Lower lobe of right lung (tissue), 2 donors: ENCODE measurements at regions of chr11 and their contacts with region 1.

Region 1: GRCh38 chr11:2892215-2893020 is 6.8 kb upstream of the CDKN1C start:
- DNase-seq: peak; percentile 67
- ATAC-seq: peak; percentile 59 to 68
- H3K4me3 ChIP-seq: peak overlapping the region; percentile 56
- H3K27ac ChIP-seq: peak overlapping the region; percentile 72
- H3K4me1 ChIP-seq: peaks cover 37% of the 10 kb centered on the region
- H3K27me3 ChIP-seq: no peaks in the 10 kb centered on the region
- CTCF ChIP-seq: peak; percentile 91

Region 2: DNA sequence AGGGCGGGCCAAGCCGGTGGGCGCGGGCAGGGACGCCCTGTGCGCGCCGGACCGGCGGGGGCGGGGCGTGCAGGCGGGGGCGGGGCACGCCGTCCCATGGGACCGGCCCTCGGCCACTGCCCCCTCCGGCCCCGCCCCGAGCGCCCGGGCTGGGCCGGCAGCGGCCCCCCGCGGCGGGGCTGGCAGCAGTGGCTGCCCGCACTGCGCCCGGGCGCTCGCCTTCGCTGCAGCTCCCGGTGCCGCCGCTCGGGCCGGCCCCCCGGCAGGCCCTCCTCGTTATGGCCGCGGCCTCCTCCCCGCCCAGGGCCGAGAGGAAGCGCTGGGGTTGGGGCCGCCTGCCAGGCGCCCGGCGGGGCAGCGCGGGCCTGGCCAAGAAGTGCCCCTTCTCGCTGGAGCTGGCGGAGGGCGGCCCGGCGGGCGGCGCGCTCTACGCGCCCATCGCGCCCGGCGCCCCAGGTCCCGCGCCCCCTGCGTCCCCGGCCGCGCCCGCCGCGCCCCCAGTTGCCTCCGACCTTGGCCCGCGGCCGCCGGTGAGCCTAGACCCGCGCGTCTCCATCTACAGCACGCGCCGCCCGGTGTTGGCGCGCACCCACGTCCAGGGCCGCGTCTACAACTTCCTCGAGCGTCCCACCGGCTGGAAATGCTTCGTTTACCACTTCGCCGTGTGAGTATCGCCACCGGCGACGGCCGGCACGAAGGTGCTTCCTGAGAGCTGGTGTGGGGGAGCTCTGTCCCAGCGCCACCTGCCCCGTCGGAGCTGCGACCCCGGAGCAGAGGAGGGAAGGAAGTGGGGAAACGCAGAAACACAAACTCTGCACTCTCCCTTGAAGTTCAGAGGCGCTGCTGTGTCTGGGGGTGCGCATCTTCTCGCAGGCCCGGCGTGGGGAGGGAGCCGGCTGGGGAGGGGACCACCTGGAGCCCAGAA is 447.3 kb before region 1 on chr11 and contains the start of gene KCNQ1:
- intact Hi-C with region 1: loop called (anchors 10 kb)
- DNase-seq: peak; percentile 86
- ATAC-seq: peak; percentile 92 to 93
- H3K4me3 ChIP-seq: peak within 1 kb of the TSS; percentile 61
- H3K27ac ChIP-seq: peak within 1 kb of the TSS; percentile 62
- H3K4me1 ChIP-seq: peaks cover 35% of the 10 kb centered on the region
- H3K27me3 ChIP-seq: peaks cover 4% of the 10 kb centered on the region
- CTCF ChIP-seq: no peak
- total RNA-seq, gene KCNQ1: 51.0 TPM

Region 3: DNA sequence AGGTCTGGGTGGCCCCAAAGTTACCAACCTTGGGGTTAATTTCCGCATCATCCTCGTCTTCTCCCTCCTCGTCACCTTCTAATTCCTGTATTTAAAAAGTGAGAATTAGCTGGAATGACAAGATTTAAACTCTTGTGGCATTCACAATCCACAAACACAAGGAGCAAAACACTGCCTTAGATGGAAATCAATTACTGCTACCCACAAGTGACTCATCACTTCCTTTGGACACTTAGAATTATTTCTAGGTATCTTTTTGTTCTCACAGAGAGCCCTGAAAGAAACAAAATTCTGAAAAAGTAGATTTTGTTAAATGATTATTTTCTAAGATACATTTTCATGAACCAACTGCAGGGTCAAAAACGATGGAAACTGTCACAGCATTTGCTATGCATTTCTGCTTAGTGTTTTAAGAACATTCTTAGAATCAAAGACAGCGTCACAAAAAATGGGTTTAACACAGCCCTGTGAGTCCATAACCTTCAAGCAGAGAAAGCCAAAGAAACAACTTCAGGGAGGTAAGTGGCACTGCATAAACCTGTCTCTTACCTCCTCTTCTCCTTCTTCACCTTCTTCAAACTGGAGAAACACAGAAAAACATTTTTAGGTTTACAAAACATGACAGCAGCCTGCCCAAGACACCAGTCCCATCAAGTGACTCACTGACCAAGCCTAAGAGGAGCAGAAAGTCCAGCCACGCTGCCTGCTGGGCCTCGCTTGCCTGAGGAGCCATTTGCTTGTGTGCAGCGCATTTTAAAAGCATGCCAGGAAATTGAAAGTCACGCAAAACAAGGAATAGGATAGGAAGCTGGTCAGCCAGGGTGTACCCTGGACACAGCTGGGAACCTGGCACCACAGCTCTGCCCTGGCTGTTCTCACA is 59.1 kb after region 1 on chr11:
- intact Hi-C with region 1: no loop called
- DNase-seq: no peak
- ATAC-seq: no peak
- H3K4me3 ChIP-seq: no peak overlapping the region
- H3K27ac ChIP-seq: peak overlapping the region; percentile 8
- H3K4me1 ChIP-seq: peaks cover 5% of the 10 kb centered on the region
- H3K27me3 ChIP-seq: no peaks in the 10 kb centered on the region
- CTCF ChIP-seq: no peak